ENCODE measurements at regions of chr11 and their contacts with region 1.

Region 1: DNA sequence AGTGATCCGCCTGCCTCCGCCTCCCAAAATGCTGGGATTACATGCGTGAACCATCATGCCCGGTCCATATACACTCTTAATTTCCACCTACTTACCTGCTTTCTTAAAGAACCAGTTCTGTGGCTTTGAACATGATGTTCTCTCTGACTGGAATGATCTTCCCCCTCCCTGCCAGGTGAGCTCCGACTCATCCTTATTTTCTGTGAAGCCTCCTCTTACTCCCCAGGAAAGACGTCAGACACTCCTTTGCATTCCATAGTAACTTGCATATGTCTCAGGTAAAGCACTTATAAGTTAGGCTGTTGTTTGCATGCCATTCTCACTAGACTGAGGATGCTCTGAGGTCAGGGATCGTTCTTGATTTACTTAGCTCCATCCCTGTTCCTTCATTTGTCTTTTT is 91.8 kb upstream of the RAB1B start:
- DNase-seq: no peak
- H3K4me3 ChIP-seq: no peak overlapping the region
- CTCF ChIP-seq: no peak
- POLR2A ChIP-seq: no peak

Region 2: DNA sequence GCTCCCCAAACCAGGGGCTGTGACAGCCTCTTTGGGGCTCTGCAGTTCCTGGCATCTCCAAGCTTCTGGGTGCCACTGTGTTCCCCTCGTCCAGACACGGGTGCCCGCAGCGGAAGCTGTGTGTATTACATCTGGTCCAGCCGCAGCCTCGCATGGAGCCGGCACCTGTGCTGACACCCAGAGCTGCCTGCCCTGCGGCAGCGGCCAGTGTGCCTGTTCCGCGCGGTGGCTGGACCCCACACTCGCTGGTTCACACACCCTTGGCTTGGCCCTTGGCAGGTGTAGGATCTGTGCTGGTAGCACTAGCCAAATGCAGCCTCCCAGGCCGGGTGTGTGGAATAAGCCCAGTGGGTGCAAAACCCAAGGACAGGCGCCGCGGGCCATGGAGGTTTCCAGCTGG is 431.6 kb before region 1 on chr11:
- intact Hi-C with region 1: loop called (anchors 5 kb)
- DNase-seq: no peak
- H3K4me3 ChIP-seq: no peak overlapping the region
- CTCF ChIP-seq: no peak
- POLR2A ChIP-seq: no peak

Region 3: GRCh38 chr11:66188580-66188979 is 11.9 kb after region 1 on chr11:
- intact Hi-C with region 1: no loop called
- DNase-seq: no peak
- H3K4me3 ChIP-seq: no peak overlapping the region
- CTCF ChIP-seq: no peak
- POLR2A ChIP-seq: no peak